Cardiac septum (tissue), 1 donor: ENCODE measurements at regions of chr10 and their contacts with region 1.

Region 1: GRCh38 chr10:95841661-95842498 is 65.9 kb upstream of the CC2D2B start:
- DNase-seq: no peak

Region 2: GRCh38 chr10:95181726-95182125 is 660.2 kb before region 1 on chr10:
- intact Hi-C with region 1: no loop called
- DNase-seq: no peak

Region 3: GRCh38 chr10:95741807-95742467 is 99.9 kb before region 1 on chr10:
- intact Hi-C with region 1: loop called (anchors 5 kb)
- DNase-seq: no peak

Region 4: GRCh38 chr10:96043033-96043932 is 201.4 kb after region 1 on chr10 and contains the start of gene CCNJ:
- intact Hi-C with region 1: no loop called
- DNase-seq: peak; percentile 92
- total RNA-seq, gene CCNJ: 3.4 TPM